ENCODE measurements at regions of chr9 and their contacts with region 1.

Region 1: GRCh38 chr9:128875790-128876160 is 6.0 kb downstream of the KYAT1 start:
- DNase-seq: no peak
- ATAC-seq: no peak
- H3K4me3 ChIP-seq: no peak overlapping the region
- H3K4me3 Mint-ChIP-seq: no peak overlapping the region
- H3K27ac ChIP-seq: no peak overlapping the region
- H3K27ac Mint-ChIP-seq: no peak overlapping the region
- H3K4me1 ChIP-seq: peaks cover 0 to 5% of the 10 kb centered on the region in 2 donors
- H3K4me1 Mint-ChIP-seq: peaks cover 12 to 34% (median 20%) of the 10 kb centered on the region in 7 donors
- H3K27me3 ChIP-seq: no peaks in the 10 kb centered on the region
- H3K27me3 Mint-ChIP-seq: no peaks in the 10 kb centered on the region

Region 2: DNA sequence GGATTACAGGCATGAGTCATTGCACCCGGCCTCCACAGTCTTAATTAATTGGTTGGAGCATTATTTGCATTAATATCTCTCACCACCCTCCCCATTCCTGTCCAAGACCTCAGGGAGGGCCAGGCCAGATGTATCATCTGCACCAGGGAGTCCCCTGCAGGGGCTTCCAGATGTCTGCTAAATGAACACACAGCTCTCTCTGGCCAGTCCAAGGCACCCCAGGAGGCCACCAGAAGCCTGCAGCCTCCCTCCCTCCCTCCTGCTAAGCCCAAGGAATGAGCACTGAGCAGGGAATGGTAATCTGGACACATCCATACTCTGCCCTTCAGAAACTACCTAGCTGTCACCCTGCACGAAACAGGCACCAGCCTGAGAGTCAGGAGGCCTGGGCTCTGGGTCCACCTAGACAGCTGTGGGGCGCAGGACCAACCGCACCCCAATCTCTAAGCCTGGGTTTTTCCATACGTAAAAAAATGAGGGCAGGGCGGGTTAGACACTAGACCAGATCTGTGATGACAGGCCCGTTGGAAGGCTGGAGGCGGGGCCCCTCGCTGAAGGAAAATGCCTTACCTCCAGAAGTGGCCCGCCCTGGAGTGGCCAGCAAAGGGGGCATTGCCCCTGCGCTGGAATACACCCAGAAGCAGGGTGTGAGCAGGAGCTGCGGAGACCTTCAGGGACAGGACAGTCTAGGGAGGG is 692.7 kb before region 1 on chr9:
- CTCF ChIA-PET with region 1: no interaction called
- POLR2A ChIA-PET with region 1: no interaction called
- intact Hi-C with region 1: no loop called
- DNase-seq: no peak
- ATAC-seq: no peak
- H3K4me3 ChIP-seq: no peak overlapping the region
- H3K4me3 Mint-ChIP-seq: no peak overlapping the region
- H3K27ac ChIP-seq: no peak overlapping the region
- H3K27ac Mint-ChIP-seq: no peak overlapping the region
- H3K4me1 ChIP-seq: no peaks in the 10 kb centered on the region
- H3K4me1 Mint-ChIP-seq: peaks cover 5 to 13% (median 8%) of the 10 kb centered on the region in 7 donors
- H3K27me3 ChIP-seq: no peaks in the 10 kb centered on the region
- H3K27me3 Mint-ChIP-seq: no peaks in the 10 kb centered on the region

Region 3: GRCh38 chr9:128643519-128644300 is 232.1 kb before region 1 on chr9:
- CTCF ChIA-PET with region 1: interaction called, 11 read pairs
- POLR2A ChIA-PET with region 1: no interaction called
- intact Hi-C with region 1: no loop called
- DNase-seq: no peak
- ATAC-seq: no peak
- H3K4me3 ChIP-seq: no peak overlapping the region
- H3K4me3 Mint-ChIP-seq: no peak overlapping the region
- H3K27ac ChIP-seq: no peak overlapping the region
- H3K27ac Mint-ChIP-seq: peak overlapping the region in 1 of 9 donors; percentile 60
- H3K4me1 ChIP-seq: no peaks in the 10 kb centered on the region
- H3K4me1 Mint-ChIP-seq: peaks cover 0 to 3% (median 0%) of the 10 kb centered on the region in 7 donors
- H3K27me3 ChIP-seq: no peaks in the 10 kb centered on the region
- H3K27me3 Mint-ChIP-seq: no peaks in the 10 kb centered on the region

Region 4: GRCh38 chr9:128927731-128928411 is 52.1 kb after region 1 on chr9:
- CTCF ChIA-PET with region 1: interaction called, 14 read pairs
- POLR2A ChIA-PET with region 1: interaction called, 4 read pairs
- intact Hi-C with region 1: loop called in 1 of 2 experiments (anchors 5 kb)
- DNase-seq: peak; percentile 24 to 69 (median 46)
- ATAC-seq: peak; percentile 77
- H3K4me3 ChIP-seq: no peak overlapping the region
- H3K4me3 Mint-ChIP-seq: peak overlapping the region in 3 of 10 donors; percentile 11 to 47 (median 39)
- H3K27ac ChIP-seq: no peak overlapping the region
- H3K27ac Mint-ChIP-seq: peak overlapping the region in 8 of 9 donors; percentile 1 to 76 (median 50)
- H3K4me1 ChIP-seq: peaks cover 3 to 6% of the 10 kb centered on the region in 2 donors
- H3K4me1 Mint-ChIP-seq: peaks cover 12 to 22% (median 19%) of the 10 kb centered on the region in 7 donors
- H3K27me3 ChIP-seq: no peaks in the 10 kb centered on the region
- H3K27me3 Mint-ChIP-seq: peaks cover 0 to 3% (median 0%) of the 10 kb centered on the region in 5 donors

Measured in naive thymus-derived CD4-positive, alpha-beta T cell (primary cell).